Activated B cell treated with CpG ODN at 0.5 μM for 24 hours (primary cell): ENCODE measurements at regions of chrX and their contacts with region 1.

Region 1: DNA sequence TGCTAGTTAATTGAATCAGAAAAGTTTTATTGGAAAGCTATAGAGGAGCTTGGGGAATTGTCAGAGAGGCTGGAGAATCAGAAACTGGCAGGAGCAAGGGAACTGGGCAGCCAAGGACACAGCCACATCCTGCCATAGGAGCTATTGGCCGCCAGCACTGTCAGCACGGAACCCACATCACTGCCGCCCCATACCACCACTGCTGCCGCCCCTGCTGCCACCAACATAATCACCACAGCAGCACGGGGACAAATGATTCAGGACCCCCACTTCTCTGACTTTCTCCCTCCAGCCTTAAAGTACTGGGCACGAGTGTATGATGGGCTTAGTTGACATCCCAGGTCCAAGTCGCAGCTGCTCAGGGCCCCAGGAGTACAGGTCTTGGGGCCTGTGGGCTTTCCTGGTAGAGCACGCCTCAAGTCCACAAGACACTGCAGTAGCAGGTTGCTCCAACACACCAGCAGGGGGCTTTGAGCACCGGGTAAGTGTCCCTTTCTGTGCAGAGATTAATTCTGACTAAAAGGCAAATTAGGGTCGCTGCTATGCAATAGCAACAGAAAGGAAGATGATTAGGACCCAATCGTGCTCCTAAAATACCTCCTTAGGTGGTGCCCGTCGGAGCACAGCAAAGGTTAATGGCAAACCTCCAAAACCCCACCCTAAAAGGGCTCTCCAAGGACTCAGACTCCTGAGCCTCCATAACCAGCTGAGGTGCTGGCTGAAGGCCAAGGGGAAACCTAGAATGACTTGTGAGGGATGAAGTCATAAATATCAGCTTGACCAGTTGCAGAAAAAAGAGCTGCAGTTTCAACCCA is 6.9 kb downstream of the PJA1 start:
- DNase-seq: no peak
- ATAC-seq: peak; percentile 73
- H3K4me3 Mint-ChIP-seq: no peak overlapping the region
- H3K27ac Mint-ChIP-seq: no peak overlapping the region
- H3K4me1 Mint-ChIP-seq: peaks cover 10% of the 10 kb centered on the region
- H3K27me3 Mint-ChIP-seq: no peaks in the 10 kb centered on the region
- CTCF ChIP-seq: no peak

Region 2: GRCh38 chrX:68721546-68721945 is 436.8 kb before region 1 on chrX:
- CTCF ChIA-PET with region 1: no interaction called
- POLR2A ChIA-PET with region 1: no interaction called
- intact Hi-C with region 1: no loop called
- DNase-seq: no peak
- ATAC-seq: no peak
- H3K4me3 Mint-ChIP-seq: no peak overlapping the region
- H3K27ac Mint-ChIP-seq: no peak overlapping the region
- H3K4me1 Mint-ChIP-seq: no peaks in the 10 kb centered on the region
- H3K27me3 Mint-ChIP-seq: no peaks in the 10 kb centered on the region
- CTCF ChIP-seq: no peak

Region 3: DNA sequence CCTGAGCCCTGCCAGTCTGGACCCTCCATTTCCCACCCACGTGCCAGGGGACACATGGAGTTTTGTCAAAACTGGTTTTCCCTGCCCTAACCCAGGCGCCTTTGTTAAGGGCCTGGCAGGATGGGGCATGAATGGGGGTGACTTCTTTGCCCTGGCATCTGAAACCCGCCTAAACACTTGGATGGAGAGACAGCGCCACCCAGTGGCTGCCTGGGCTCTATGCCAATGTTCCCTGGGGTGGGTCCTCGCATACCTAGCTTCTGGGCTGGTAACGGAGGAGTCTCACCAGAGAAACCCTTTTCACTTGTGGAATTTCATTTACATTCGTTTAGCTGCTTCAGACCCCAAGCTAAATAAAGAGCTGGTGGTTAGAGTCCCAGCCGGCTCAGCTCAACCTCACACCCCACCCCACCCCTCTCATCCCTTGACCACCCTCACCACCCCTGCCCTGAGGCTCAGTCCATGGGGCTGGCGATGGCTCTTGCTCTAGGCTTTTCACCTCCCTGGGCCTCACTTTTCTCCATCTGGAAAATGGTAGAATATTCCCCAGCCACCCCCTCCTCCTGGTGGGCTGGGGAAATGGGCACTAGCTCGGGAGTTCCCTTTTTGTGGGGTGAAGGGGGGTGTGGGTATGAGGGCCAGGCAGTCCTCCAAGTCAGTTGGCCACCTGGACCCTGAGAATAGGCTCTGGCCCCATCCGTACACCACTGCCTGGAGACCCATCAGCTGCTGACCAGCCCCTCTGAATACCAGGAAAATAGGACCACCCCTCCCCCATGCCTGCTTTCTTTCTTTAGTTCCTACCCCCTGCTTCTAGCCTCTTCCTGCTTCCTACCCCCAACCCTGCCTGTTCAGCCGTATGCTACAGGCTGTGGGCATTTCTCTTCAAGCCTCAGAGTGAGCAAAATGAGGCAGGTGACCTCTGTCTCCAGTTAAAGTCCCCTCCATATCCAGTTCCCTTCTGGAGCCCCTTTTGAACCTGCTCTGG is 64.0 kb after region 1 on chrX:
- CTCF ChIA-PET with region 1: no interaction called
- POLR2A ChIA-PET with region 1: no interaction called
- intact Hi-C with region 1: loop called (anchors 1 kb)
- DNase-seq: peak; percentile 45
- ATAC-seq: peak; percentile 71
- H3K4me3 Mint-ChIP-seq: no peak overlapping the region
- H3K27ac Mint-ChIP-seq: no peak overlapping the region
- H3K4me1 Mint-ChIP-seq: peaks cover 1% of the 10 kb centered on the region
- H3K27me3 Mint-ChIP-seq: peaks cover 2% of the 10 kb centered on the region
- CTCF ChIP-seq: no peak

Region 4: DNA sequence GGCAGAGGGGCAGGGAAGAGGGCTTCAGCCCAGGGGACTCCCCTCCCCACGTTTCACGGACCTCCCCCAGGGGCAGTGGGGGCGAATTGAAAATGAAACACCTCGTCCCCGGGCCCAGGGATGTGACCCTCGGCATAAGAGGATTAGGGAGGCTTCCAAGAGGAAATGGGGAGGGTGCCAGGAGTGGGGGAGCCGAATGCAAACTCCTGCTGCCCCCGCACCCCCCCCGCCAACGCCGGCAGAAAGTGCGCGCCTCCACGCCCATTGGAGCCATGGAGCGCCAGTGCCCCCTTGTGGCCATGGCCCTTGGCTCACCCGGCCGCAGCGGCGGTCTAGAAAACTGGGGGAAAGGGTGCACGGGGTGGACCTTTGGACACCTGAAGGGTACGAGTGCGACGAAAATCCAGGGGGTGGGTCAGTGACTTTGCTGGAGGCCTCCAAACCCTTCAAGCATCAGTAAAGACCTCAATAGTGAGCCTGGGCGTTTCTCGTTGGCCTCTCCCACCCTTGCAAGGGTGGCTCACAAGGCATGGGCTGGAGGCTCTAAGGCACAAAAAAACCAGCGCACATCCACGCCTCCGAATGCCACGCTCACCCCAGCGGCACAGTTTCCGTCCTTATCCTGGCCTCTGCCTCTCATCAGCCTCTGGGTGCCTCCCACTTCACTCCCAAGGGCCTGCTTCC is 127.7 kb after region 1 on chrX:
- CTCF ChIA-PET with region 1: interaction called, 3 read pairs
- POLR2A ChIA-PET with region 1: no interaction called
- intact Hi-C with region 1: loop called (anchors 1 kb)
- DNase-seq: peak; percentile 42
- ATAC-seq: peak; percentile 54
- H3K4me3 Mint-ChIP-seq: peak overlapping the region; percentile 52
- H3K27ac Mint-ChIP-seq: no peak overlapping the region
- H3K4me1 Mint-ChIP-seq: peaks cover 2% of the 10 kb centered on the region
- H3K27me3 Mint-ChIP-seq: no peaks in the 10 kb centered on the region
- CTCF ChIP-seq: no peak